PC-9 (cell line): ENCODE measurements at regions of chr1 and their contacts with region 1.

Region 1: GRCh38 chr1:18913065-18913835 is 10.9 kb upstream of the ALDH4A1 start:
- DNase-seq: peak in 1 of 2 experiments; percentile 77
- H3K4me3 ChIP-seq: no peak overlapping the region
- H3K27ac ChIP-seq: no peak overlapping the region
- H3K4me1 ChIP-seq: no peaks in the 10 kb centered on the region
- H3K27me3 ChIP-seq: no peaks in the 10 kb centered on the region
- CTCF ChIP-seq: peak; percentile 87

Region 2: GRCh38 chr1:18956369-18957135 is 43.3 kb after region 1 on chr1 and contains the start of gene IFFO2:
- CTCF ChIA-PET with region 1: interaction called, 10 read pairs
- POLR2A ChIA-PET with region 1: no interaction called
- intact Hi-C with region 1: loop called (anchors 10 kb)
- DNase-seq: peak; percentile 52 to 97
- H3K4me3 ChIP-seq: peak within 1 kb of the TSS; percentile 80
- H3K27ac ChIP-seq: no peak within 1 kb of the TSS
- H3K4me1 ChIP-seq: peaks cover 20% of the 10 kb centered on the region
- H3K27me3 ChIP-seq: no peaks in the 10 kb centered on the region
- CTCF ChIP-seq: no peak
- total RNA-seq, gene IFFO2: 11.7 and 16.5 TPM in 2 replicates

Region 3: GRCh38 chr1:18972531-18972930 is 59.3 kb after region 1 on chr1:
- CTCF ChIA-PET with region 1: interaction called, 5 read pairs
- POLR2A ChIA-PET with region 1: no interaction called
- intact Hi-C with region 1: loop called (anchors 2 kb)
- DNase-seq: peak in 1 of 2 experiments; percentile 56
- H3K4me3 ChIP-seq: no peak overlapping the region
- H3K27ac ChIP-seq: no peak overlapping the region
- H3K4me1 ChIP-seq: peaks cover 10% of the 10 kb centered on the region; the same call in 1 of the 2 replicates
- H3K27me3 ChIP-seq: no peaks in the 10 kb centered on the region
- CTCF ChIP-seq: peak; percentile 31; the same call in 1 of the 2 replicates

Region 4: DNA sequence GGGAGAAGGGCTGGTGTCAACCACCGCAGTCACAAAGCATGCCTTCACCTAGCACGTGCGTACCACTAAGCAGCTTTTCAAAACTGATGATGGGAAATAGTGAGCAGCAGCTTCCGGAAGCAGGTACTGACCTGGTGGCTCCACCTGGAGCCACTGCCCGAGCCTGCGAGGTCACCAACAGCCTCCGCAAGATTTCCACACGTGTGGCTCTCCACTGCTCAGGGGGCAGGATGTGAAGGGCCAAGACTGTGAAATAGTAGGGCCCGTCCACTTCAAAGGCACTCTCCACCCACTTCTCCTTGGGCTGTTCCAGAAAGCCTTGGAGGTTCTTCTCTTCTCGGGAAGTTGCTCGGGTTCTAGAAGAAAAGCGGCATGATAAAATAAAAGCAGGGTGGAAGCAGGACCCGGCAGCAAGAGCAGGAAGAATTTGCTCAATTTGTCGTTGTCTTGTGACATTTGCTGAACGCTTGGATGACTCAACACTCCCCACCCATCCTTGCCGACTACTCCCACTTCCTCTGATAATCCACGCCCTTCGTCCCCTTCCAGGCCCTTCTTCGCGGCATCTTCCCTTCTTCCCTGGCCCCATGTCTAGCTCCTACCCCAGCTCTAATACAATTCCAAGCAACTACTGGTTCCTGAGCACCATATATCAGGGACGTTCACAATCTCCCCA is 168.1 kb after region 1 on chr1:
- CTCF ChIA-PET with region 1: no interaction called
- POLR2A ChIA-PET with region 1: no interaction called
- intact Hi-C with region 1: loop called (anchors 5 kb)
- DNase-seq: peak in 1 of 2 experiments; percentile 19
- H3K4me3 ChIP-seq: no peak overlapping the region
- H3K27ac ChIP-seq: no peak overlapping the region
- H3K4me1 ChIP-seq: no peaks in the 10 kb centered on the region
- H3K27me3 ChIP-seq: no peaks in the 10 kb centered on the region
- CTCF ChIP-seq: no peak

Region 5: GRCh38 chr1:19209990-19210771 is 296.9 kb after region 1 on chr1 and contains the start of gene UBR4:
- CTCF ChIA-PET with region 1: no interaction called
- POLR2A ChIA-PET with region 1: no interaction called
- intact Hi-C with region 1: no loop called
- DNase-seq: peak; percentile 84 to 92
- H3K4me3 ChIP-seq: peak within 1 kb of the TSS; percentile 85
- H3K27ac ChIP-seq: peak within 1 kb of the TSS; percentile 81
- H3K4me1 ChIP-seq: peaks cover 19% of the 10 kb centered on the region
- H3K27me3 ChIP-seq: no peaks in the 10 kb centered on the region
- CTCF ChIP-seq: no peak
- total RNA-seq, gene UBR4: 117 and 126 TPM in 2 replicates